Endothelial cell of umbilical vein (primary cell): ENCODE measurements at regions of chr6 and their contacts with region 1.

Region 1: DNA sequence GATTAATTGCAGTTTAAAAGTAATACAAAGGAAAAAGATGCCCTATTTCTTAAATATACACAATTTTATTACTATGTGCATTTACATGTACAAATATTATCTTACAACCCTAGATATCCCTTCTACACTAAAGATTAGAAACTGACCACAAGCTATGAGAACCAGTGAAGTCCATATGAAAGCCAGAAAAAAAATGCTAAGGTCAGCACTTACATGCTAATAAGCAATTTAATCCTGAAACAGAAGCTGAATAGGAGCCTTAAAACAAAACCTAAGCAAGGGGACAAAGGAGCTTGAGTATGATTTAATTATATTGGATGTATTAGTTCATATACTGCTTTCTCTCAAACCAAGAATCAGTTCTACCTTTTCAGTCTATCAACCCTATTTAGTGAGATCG is 14.2 kb downstream of the CEP162 start:
- DNase-seq: no peak
- H3K4me3 ChIP-seq: no peak overlapping the region
- H3K27ac ChIP-seq: no peak overlapping the region
- H3K4me1 ChIP-seq: peaks cover 13% of the 10 kb centered on the region
- H3K27me3 ChIP-seq: no peaks in the 10 kb centered on the region
- CTCF ChIP-seq: no peak
- POLR2A ChIP-seq: no peak

Region 2: DNA sequence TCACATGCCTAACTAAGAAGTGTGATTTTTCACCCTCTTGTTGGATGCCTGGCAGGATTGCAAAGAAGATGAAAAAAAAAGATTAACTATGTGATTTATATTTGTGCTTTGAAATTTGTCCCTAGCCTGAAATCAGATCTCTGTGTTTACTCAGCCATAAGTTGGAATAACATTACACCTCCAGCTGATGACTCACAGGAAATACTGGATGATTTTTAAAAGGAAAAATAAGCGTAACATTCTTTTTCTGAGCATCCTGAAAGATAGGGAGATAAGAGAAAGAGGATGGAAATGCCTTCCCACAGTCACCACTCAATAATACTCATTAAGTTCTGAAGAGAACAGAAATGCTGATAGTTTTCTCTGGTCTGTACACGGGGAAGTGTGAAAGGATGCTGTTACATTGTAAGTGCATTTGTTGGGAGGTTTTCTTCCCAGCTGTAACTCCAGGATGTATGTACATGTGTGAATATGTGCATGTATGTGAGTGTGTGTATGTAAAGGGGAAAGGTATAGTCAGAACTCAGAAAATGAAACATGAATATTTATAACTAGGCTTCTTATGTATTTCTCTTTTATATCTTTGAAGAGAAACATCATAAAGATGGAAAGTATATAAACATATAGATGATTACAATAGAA is 397.5 kb before region 1 on chr6:
- CTCF ChIA-PET with region 1: no interaction called
- POLR2A ChIA-PET with region 1: no interaction called
- dilution Hi-C with region 1: no loop called
- intact Hi-C with region 1: no loop called
- DNase-seq: peak; percentile 97
- H3K4me3 ChIP-seq: no peak overlapping the region
- H3K27ac ChIP-seq: peak overlapping the region; percentile 57
- H3K4me1 ChIP-seq: peaks cover 28% of the 10 kb centered on the region
- H3K27me3 ChIP-seq: no peaks in the 10 kb centered on the region
- CTCF ChIP-seq: no peak
- POLR2A ChIP-seq: peak; percentile 78

Region 3: GRCh38 chr6:84027340-84028181 is 185.7 kb before region 1 on chr6:
- CTCF ChIA-PET with region 1: interaction called, 4 read pairs
- POLR2A ChIA-PET with region 1: no interaction called
- dilution Hi-C with region 1: no loop called
- intact Hi-C with region 1: loop called (anchors 5 kb)
- DNase-seq: peak; percentile 98
- H3K4me3 ChIP-seq: no peak overlapping the region
- H3K27ac ChIP-seq: peak overlapping the region; percentile 26
- H3K4me1 ChIP-seq: peaks cover 24% of the 10 kb centered on the region
- H3K27me3 ChIP-seq: no peaks in the 10 kb centered on the region
- CTCF ChIP-seq: no peak
- POLR2A ChIP-seq: no peak

Region 4: DNA sequence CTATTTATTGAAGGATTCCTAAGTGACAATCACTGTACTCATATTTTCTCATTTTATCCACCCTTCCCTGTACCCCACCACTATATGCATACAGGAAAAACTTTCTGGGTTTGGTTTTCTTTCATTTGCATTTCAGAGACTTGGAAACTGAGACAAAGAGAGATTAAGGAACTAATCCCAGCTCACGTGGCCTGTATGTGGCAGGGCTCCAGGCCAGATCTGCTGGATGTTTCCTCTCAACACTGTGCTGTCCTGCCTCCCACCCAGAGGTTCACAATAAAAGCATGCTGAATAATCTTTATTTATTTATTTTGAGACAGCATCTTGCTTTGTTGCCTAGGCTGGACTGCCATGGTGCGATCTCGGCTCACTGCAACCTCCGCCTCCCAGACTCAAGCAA is 36.0 kb before region 1 on chr6:
- CTCF ChIA-PET with region 1: no interaction called
- POLR2A ChIA-PET with region 1: no interaction called
- dilution Hi-C with region 1: no loop called
- intact Hi-C with region 1: no loop called
- DNase-seq: no peak
- H3K4me3 ChIP-seq: no peak overlapping the region
- H3K27ac ChIP-seq: no peak overlapping the region
- H3K4me1 ChIP-seq: peaks cover 7% of the 10 kb centered on the region
- H3K27me3 ChIP-seq: no peaks in the 10 kb centered on the region
- CTCF ChIP-seq: no peak
- POLR2A ChIP-seq: no peak

Region 5: GRCh38 chr6:84361372-84362192 is 148.4 kb after region 1 on chr6:
- CTCF ChIA-PET with region 1: no interaction called
- POLR2A ChIA-PET with region 1: no interaction called
- dilution Hi-C with region 1: no loop called
- intact Hi-C with region 1: no loop called
- DNase-seq: peak; percentile 2
- H3K4me3 ChIP-seq: no peak overlapping the region
- H3K27ac ChIP-seq: no peak overlapping the region
- H3K4me1 ChIP-seq: no peaks in the 10 kb centered on the region
- H3K27me3 ChIP-seq: peaks cover 0 to 4% of the 10 kb centered on the region in 2 experiments
- CTCF ChIP-seq: no peak
- POLR2A ChIP-seq: no peak